ENCODE measurements at regions of chr7 and their contacts with region 1.

Region 1: DNA sequence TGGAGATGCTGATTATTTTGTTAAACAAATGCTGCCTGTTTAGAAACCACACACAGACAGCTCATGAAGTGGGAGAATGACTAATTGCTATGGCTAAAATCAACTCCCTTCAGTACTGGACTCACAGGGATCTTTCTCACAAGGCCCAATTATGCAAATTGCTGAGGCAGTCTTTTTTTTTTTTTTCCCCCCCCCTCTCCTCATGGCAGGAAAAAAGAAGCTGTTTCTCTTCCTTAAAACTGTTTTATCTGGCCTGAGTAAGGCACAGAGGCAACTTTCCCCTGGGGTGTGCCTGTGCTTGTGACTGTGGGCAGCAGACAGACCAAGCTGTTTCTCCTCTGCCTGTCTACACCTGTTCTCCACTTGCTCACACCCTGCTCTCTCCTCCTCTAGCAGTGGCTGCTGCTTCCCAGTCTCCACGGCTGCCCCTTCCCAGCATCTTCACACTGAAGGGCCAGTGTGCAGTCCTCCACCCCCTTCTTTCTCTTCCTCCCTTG is 65.4 kb upstream of the STEAP1B start:
- DNase-seq: no peak

Region 2: GRCh38 chr7:22696541-22697228 is 131.3 kb after region 1 on chr7:
- intact Hi-C with region 1: no loop called
- DNase-seq: no peak

Region 3: DNA sequence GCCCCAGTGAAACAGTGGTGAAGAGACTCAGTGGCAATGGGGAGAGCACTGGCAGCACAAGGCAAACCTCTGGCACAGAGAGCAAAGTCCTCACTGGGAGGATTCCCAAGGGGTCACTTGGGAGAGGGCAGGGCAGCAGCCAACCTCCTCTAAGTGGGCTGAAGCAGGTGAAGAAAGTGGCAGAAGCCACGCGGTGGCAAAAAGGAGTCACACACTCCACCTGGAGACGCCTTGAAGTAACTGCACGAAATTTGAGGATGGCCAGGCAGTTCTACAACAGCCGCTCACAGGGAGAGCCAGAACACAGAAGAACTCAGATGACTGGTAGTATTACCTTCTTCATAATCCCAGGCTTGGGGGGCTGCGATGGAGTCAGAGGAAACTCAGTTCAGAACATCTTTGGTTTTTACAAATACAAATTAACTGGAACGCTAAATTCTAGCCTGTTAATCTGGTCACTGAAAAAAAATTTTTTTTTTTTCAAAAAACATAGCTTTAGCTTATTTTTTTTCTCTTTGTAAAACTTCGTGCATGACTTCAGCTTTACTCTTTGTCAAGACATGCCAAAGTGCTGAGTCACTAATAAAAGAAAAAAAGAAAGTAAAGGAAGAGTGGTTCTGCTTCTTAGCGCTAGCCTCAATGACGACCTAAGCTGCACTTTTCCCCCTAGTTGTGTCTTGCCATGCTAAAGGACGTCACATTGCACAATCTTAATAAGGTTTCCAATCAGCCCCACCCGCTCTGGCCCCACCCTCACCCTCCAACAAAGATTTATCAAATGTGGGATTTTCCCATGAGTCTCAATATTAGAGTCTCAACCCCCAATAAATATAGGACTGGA is 161.2 kb after region 1 on chr7:
- intact Hi-C with region 1: loop called (anchors 5 kb)
- DNase-seq: peak; percentile 85